HepG2 (cell line): ENCODE measurements at regions of chr19 and their contacts with region 1.

Region 1: GRCh38 chr19:18281082-18282020 is at the start of gene JUND:
- DNase-seq: peak; percentile 92
- ATAC-seq: peak; percentile 50
- H3K4me3 ChIP-seq: peak within 1 kb of the TSS; percentile 74 to 100 (median 84)
- H3K27ac ChIP-seq: peak within 1 kb of the TSS; percentile 99
- H3K4me1 ChIP-seq: peaks cover 64% of the 10 kb centered on the region
- H3K27me3 ChIP-seq: no peaks in the 10 kb centered on the region; a peak in 1 of 5 replicates
- CTCF ChIP-seq: no peak
- EP300 ChIP-seq: peak; percentile 43 to 80; a peak in 3 of 4 replicates
- POLR2A ChIP-seq: peak; percentile 92 to 98
- RAD21 ChIP-seq: peak; percentile 66; the same call in 1 of the 2 replicates
- total RNA-seq, gene JUND: 31.8 and 41.2 TPM in 2 replicates

Region 2: GRCh38 chr19:18224525-18225354 is 56.6 kb before region 1 on chr19:
- CTCF ChIA-PET with region 1: no interaction called
- POLR2A ChIA-PET with region 1: interaction called, 15 read pairs
- in situ Hi-C with region 1: no loop called
- intact Hi-C with region 1: no loop called
- DNase-seq: peak; percentile 95
- ATAC-seq: peak; percentile 94
- H3K4me3 ChIP-seq: peak overlapping the region; percentile 54 to 80 (median 58)
- H3K27ac ChIP-seq: peak overlapping the region; percentile 65
- H3K4me1 ChIP-seq: peaks cover 51% of the 10 kb centered on the region
- H3K27me3 ChIP-seq: peaks cover 1 to 7% of the 10 kb centered on the region in 2 experiments; a peak in 2 of 5 replicates
- CTCF ChIP-seq: no peak
- EP300 ChIP-seq: no peak
- POLR2A ChIP-seq: 0 out of 4 replicates have a peak, but pooled peaks of 1 of the 2 experiments have one; percentile 15
- RAD21 ChIP-seq: no peak

Region 3: DNA sequence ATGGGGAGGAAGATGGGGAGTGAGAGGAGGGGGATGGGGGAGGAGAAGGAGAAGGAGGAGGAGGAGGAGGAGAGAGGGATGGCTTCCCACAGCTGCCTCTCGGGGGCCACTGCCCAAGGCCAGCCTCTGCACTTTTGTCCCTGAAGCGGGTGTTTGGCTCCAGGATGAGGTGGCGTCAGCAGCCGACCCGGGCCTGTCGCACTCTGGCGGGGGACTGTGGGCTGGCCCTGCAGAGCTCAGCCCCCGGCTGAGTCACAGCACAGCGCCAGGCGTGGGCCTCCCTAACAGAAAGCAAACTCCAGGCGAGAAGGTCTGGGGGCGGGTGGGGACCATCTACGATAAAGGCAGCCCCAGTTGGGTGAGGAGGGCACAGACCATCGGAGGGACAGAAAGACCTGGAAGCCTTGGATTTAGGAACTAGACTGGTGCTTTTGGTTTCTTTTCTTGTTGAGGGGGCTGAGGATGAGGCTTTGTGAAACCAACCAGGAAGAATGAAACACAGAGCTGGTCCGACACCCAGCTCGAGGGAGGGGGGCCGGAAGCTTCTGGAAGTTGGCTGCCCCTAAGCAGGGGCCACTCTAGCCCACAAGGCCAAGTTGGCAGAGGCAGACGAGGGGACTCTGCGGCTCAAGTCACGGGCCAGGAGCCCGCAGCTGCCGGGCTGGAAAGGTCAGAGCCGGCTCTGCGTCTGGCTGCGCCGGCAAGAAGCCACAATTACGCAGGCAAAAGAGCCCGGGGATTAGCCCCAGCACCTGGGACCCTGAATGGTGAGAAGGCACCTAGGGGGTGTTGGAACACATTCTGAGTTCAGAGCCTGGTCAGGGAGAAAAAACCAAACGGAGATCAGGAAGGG is 23.3 kb after region 1 on chr19:
- CTCF ChIA-PET with region 1: interaction called, 3 read pairs
- POLR2A ChIA-PET with region 1: interaction called, 187 read pairs
- in situ Hi-C with region 1: no loop called
- intact Hi-C with region 1: loop called (anchors 1 kb)
- DNase-seq: peak; percentile 80
- ATAC-seq: peak; percentile 87
- H3K4me3 ChIP-seq: peak overlapping the region; percentile 60 to 77 (median 61)
- H3K27ac ChIP-seq: peak overlapping the region; percentile 86
- H3K4me1 ChIP-seq: peaks cover 56% of the 10 kb centered on the region
- H3K27me3 ChIP-seq: no peaks in the 10 kb centered on the region
- CTCF ChIP-seq: peak; percentile 61
- EP300 ChIP-seq: peak in 1 of 2 experiments; percentile 35; a peak in 1 of 4 replicates
- POLR2A ChIP-seq: peak; percentile 70 to 72
- RAD21 ChIP-seq: no peak

Region 4: GRCh38 chr19:18328340-18329034 is 47.1 kb after region 1 on chr19:
- CTCF ChIA-PET with region 1: interaction called, 50 read pairs
- POLR2A ChIA-PET with region 1: interaction called, 110 read pairs
- in situ Hi-C with region 1: loop called (anchors 5 kb)
- intact Hi-C with region 1: loop called (anchors 1 kb)
- DNase-seq: peak; percentile 97
- ATAC-seq: peak; percentile 92
- H3K4me3 ChIP-seq: peak overlapping the region; percentile 9 to 59 (median 29)
- H3K27ac ChIP-seq: peak overlapping the region; percentile 69
- H3K4me1 ChIP-seq: peaks cover 73% of the 10 kb centered on the region
- H3K27me3 ChIP-seq: no peaks in the 10 kb centered on the region
- CTCF ChIP-seq: peak; percentile 90
- EP300 ChIP-seq: 0 out of 4 replicates have a peak, but pooled peaks of 1 of the 2 experiments have one; percentile 9
- POLR2A ChIP-seq: peak in 1 of 2 experiments; percentile 71; a peak in 2 of 4 replicates
- RAD21 ChIP-seq: peak; percentile 58; the same call in 1 of the 2 replicates

Region 5: DNA sequence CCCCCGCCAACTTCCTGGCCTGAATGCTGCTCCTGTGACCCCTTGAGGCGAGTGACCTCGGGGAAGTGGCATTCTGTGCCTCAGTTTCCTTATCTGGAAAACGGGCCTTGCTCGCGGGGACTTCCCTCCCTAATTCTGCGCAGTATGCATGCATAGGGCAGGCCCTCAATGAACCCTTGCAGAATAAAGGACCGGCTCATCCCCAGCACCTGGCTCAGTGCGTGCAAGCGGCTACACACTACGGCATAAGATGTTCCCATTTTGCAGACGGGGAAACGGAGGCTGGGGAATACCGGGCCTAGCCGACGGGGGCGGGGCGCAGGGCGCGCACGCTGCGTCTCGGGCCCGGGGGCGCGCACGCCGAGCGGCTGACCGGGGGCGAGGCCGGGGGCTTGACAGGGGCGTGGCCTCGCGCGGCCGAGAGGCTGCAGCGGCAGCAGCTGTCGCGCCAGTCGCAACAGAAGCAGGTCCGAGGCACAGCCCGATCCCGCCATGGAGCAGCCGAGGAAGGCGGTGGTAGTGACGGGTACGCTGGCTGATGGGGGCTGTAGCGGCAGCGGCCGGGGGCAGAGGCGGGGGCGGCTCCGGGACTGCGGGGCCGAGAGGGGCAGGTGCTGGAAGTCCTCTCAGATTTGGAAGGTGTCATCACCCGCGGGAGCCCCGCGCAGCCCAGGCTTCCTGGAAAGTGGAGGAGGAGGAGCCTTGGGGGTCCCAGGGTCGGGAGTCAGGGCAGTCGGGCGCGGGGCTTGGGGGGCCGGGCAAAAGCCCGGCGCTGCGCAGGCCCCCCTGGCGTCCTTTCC is 59.0 kb after region 1 on chr19 and contains the start of gene PGPEP1:
- CTCF ChIA-PET with region 1: no interaction called
- POLR2A ChIA-PET with region 1: interaction called, 30 read pairs
- in situ Hi-C with region 1: no loop called
- intact Hi-C with region 1: no loop called
- DNase-seq: no peak
- ATAC-seq: peak; percentile 46
- H3K4me3 ChIP-seq: peak within 1 kb of the TSS; percentile 76 to 97 (median 89)
- H3K27ac ChIP-seq: peak within 1 kb of the TSS; percentile 88
- H3K4me1 ChIP-seq: peaks cover 67% of the 10 kb centered on the region
- H3K27me3 ChIP-seq: no peaks in the 10 kb centered on the region
- CTCF ChIP-seq: no peak
- EP300 ChIP-seq: no peak; a peak in 1 of 4 replicates
- POLR2A ChIP-seq: peak in 1 of 2 experiments; percentile 67; a peak in 2 of 4 replicates
- RAD21 ChIP-seq: no peak
- total RNA-seq, gene PGPEP1: 56.6 and 57.7 TPM in 2 replicates

Region 6: DNA sequence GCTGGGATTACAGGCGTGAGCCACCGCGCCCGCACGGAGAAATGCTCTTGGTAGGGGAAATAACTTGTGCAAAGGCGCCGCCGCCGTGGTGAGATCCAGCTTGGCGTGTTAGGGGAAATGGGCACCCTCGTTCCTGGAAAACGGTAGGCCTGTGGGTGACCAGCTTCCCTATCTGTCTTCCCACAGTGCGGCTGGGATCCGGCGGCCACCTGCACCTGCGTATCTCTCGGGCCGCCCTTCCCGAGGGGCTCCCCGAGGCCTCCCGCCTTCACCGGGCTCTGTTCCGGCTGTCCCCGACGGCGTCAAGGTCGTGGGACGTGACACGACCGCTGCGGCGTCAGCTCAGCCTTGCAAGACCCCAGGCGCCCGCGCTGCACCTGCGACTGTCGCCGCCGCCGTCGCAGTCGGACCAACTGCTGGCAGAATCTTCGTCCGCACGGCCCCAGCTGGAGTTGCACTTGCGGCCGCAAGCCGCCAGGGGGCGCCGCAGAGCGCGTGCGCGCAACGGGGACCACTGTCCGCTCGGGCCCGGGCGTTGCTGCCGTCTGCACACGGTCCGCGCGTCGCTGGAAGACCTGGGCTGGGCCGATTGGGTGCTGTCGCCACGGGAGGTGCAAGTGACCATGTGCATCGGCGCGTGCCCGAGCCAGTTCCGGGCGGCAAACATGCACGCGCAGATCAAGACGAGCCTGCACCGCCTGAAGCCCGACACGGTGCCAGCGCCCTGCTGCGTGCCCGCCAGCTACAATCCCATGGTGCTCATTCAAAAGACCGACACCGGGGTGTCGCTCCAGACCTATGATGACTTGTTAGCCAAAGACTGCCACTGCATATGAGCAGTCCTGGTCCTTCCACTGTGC is 107.0 kb after region 1 on chr19:
- CTCF ChIA-PET with region 1: interaction called, 3 read pairs
- POLR2A ChIA-PET with region 1: interaction called, 87 read pairs
- in situ Hi-C with region 1: no loop called
- intact Hi-C with region 1: no loop called
- DNase-seq: peak; percentile 52
- ATAC-seq: peak; percentile 21
- H3K4me3 ChIP-seq: peak overlapping the region; percentile 86 to 95 (median 91); a peak in 5 of 6 replicates
- H3K27ac ChIP-seq: peak overlapping the region; percentile 80
- H3K4me1 ChIP-seq: peaks cover 39% of the 10 kb centered on the region
- H3K27me3 ChIP-seq: no peaks in the 10 kb centered on the region; a peak in 1 of 5 replicates
- CTCF ChIP-seq: peak; percentile 95
- EP300 ChIP-seq: peak in 1 of 2 experiments; percentile 11; a peak in 1 of 4 replicates
- POLR2A ChIP-seq: peak; percentile 36 to 53
- RAD21 ChIP-seq: peak; percentile 90

Region 7: DNA sequence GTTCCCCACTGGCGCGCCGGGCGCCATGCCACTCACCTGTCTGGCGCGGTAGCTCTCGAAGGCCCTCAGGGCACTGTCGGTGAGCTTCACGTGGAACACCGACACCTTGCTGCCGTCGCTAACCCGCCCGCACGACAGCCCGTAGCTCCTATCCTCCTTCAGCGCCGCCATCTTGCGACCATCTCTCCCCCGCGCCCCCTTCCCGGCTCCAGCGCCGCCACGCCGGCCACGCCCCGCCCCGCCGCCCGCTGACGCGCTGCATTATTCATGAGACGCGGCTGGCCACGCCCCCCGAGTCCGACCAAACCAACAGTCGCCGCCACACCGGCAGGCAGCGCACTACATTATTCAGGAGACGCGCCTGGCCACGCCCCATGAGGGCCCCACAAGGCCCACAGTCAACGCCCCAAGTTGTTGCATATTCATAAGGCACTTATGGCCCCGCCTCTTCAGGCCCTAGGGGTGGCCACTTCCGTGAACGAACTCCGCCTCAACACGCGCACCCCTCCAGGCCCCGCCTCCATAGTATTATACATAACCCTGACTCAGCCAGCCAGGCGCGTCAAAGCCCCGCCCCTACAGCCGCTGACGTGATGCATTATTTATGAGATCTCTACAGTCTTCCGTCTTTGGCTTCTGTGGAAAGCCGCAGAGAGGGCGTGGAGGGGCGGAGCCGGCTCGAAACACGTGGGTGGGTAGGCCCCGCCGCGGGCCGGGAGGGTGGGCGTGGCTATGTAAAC is 240.7 kb after region 1 on chr19 and contains the start of gene ELL:
- CTCF ChIA-PET with region 1: no interaction called
- POLR2A ChIA-PET with region 1: interaction called, 3 read pairs
- in situ Hi-C with region 1: no loop called
- intact Hi-C with region 1: loop called (anchors 10 kb)
- DNase-seq: peak; percentile 99
- ATAC-seq: peak; percentile 77
- H3K4me3 ChIP-seq: peak within 1 kb of the TSS; percentile 95 to 100 (median 96)
- H3K27ac ChIP-seq: peak within 1 kb of the TSS; percentile 94
- H3K4me1 ChIP-seq: peaks cover 53% of the 10 kb centered on the region
- H3K27me3 ChIP-seq: no peaks in the 10 kb centered on the region; a peak in 1 of 5 replicates
- CTCF ChIP-seq: 0 out of 2 replicates have a peak, but pooled peaks have one; percentile 18
- EP300 ChIP-seq: 0 out of 4 replicates have a peak, but pooled peaks of 1 of the 2 experiments have one; percentile 9
- POLR2A ChIP-seq: peak; percentile 90 to 93
- RAD21 ChIP-seq: peak; percentile 35
- total RNA-seq, gene ELL: 3.2 and 3.7 TPM in 2 replicates